ENCODE measurements at regions of chr7 and their contacts with region 1.

Region 1: GRCh38 chr7:27160546-27161213 is 4.2 kb upstream of the HOXA7 start:
- DNase-seq: peak; percentile 70 to 84 (median 78)
- H3K4me3 ChIP-seq: peak overlapping the region; percentile 53 to 94 (median 79)
- H3K4me3 Mint-ChIP-seq: peak overlapping the region; percentile 86
- H3K27ac ChIP-seq: peak overlapping the region in 1 of 2 donors; percentile 52
- H3K27ac Mint-ChIP-seq: peak overlapping the region in 5 of 7 donors; percentile 14 to 80 (median 30)
- H3K4me1 ChIP-seq: peaks cover 60 to 77% of the 10 kb centered on the region in 2 donors
- H3K4me1 Mint-ChIP-seq: peaks cover 67% of the 10 kb centered on the region
- H3K27me3 ChIP-seq: peaks cover 61 to 92% of the 10 kb centered on the region in 2 donors
- H3K27me3 Mint-ChIP-seq: peaks cover 84 to 93% (median 85%) of the 10 kb centered on the region in 3 donors
- CTCF ChIP-seq: peak; percentile 100

Region 2: GRCh38 chr7:25862260-25863037 is 1298.2 kb before region 1 on chr7:
- intact Hi-C with region 1: loop called (anchors 5 kb)
- DNase-seq: peak; percentile 70 to 87 (median 75)
- H3K4me3 ChIP-seq: peak overlapping the region in 2 of 3 experiments; percentile 6 to 69
- H3K4me3 Mint-ChIP-seq: peak overlapping the region in 1 of 2 donors; percentile 47
- H3K27ac ChIP-seq: no peak overlapping the region
- H3K27ac Mint-ChIP-seq: peak overlapping the region in 1 of 7 donors; percentile 46
- H3K4me1 ChIP-seq: peaks cover 21 to 22% of the 10 kb centered on the region in 2 donors
- H3K4me1 Mint-ChIP-seq: peaks cover 31% of the 10 kb centered on the region
- H3K27me3 ChIP-seq: peaks cover 95 to 100% of the 10 kb centered on the region in 2 donors
- H3K27me3 Mint-ChIP-seq: peaks cover 19 to 25% (median 23%) of the 10 kb centered on the region in 3 donors
- CTCF ChIP-seq: no peak

Region 3: GRCh38 chr7:26853788-26854393 is 306.8 kb before region 1 on chr7:
- intact Hi-C with region 1: loop called (anchors 5 to 10 kb)
- DNase-seq: peak; percentile 20 to 55 (median 34)
- H3K4me3 ChIP-seq: no peak overlapping the region
- H3K4me3 Mint-ChIP-seq: no peak overlapping the region
- H3K27ac ChIP-seq: no peak overlapping the region
- H3K27ac Mint-ChIP-seq: no peak overlapping the region
- H3K4me1 ChIP-seq: peaks cover 17 to 29% of the 10 kb centered on the region in 2 donors
- H3K4me1 Mint-ChIP-seq: peaks cover 27% of the 10 kb centered on the region
- H3K27me3 ChIP-seq: peaks cover 0 to 4% of the 10 kb centered on the region in 2 donors
- H3K27me3 Mint-ChIP-seq: peaks cover 2 to 16% (median 6%) of the 10 kb centered on the region in 3 donors
- CTCF ChIP-seq: peak; percentile 71

Region 4: DNA sequence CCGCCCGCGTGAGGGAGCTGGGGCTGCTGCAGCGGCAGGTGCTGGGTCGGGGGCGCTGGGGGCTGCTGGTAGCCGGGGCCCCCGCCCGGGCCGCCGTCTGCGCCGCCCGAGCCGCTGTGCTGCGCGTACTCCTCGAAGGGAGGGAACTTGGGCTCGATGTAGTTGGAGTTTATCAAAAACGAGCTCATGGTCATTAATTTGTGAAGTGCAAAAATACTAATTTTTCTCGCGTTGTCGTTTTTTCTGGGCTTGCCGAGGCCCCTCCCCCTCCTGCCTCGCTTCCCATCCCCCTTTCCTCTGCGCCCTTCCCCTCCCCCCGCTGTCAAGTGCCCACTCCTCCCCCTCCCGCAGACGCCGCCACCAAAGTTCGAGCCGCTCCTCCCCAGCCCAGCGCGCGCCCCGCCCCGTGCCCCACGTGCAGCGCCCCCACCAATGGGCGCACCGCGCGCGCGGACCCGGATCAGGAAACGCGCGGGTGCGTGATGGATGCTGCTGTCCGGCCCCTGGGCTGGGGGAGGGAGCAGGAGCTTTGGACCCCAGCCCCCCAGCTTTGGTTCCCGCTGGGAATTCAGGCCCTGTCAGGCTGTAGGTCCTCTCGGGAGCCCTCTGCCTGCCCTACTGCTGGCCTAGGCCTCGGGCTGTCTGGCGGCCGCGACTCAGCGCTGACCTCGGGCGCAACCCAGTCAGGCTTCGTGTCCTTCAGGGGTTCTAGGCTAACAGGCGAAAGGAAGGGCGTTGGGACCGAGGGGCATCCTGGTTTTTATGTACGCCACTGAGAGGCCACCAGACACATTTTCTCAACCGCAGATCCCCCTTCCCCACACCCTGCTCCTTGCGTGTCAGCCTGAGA is 29.9 kb before region 1 on chr7 and contains the start of gene HOXA4:
- intact Hi-C with region 1: no loop called
- DNase-seq: peak; percentile 54 to 73 (median 72)
- H3K4me3 ChIP-seq: peak within 1 kb of the TSS; percentile 47 to 78 (median 76)
- H3K4me3 Mint-ChIP-seq: peak within 1 kb of the TSS; percentile 82
- H3K27ac ChIP-seq: peak within 1 kb of the TSS in 1 of 2 donors; percentile 86
- H3K27ac Mint-ChIP-seq: peak within 1 kb of the TSS in 6 of 7 donors; percentile 45 to 91 (median 85)
- H3K4me1 ChIP-seq: peaks cover 10 to 25% of the 10 kb centered on the region in 2 donors
- H3K4me1 Mint-ChIP-seq: peaks cover 26% of the 10 kb centered on the region
- H3K27me3 ChIP-seq: peaks cover under 1 to 5% of the 10 kb centered on the region in 2 donors
- H3K27me3 Mint-ChIP-seq: peaks cover 5 to 14% (median 5%) of the 10 kb centered on the region in 3 donors
- CTCF ChIP-seq: no peak
- polyA plus RNA-seq, gene HOXA4: 0.48 TPM in 1 of 3 donors, not detected in the others

Measured in CD14-positive monocyte (primary cell).